ENCODE measurements at regions of chr10 and their contacts with region 1.

Region 1: GRCh38 chr10:80540981-80541750 is 3.5 kb downstream of the SH2D4B start:
- DNase-seq: no peak
- ATAC-seq: peak; percentile 59
- H3K4me3 Mint-ChIP-seq: peak overlapping the region; percentile 76
- H3K27ac Mint-ChIP-seq: peak overlapping the region; percentile 87
- H3K4me1 Mint-ChIP-seq: peaks cover 46% of the 10 kb centered on the region
- H3K27me3 Mint-ChIP-seq: no peaks in the 10 kb centered on the region
- CTCF ChIP-seq: no peak

Region 2: GRCh38 chr10:80530251-80530650 is 10.9 kb before region 1 on chr10:
- CTCF ChIA-PET with region 1: no interaction called
- POLR2A ChIA-PET with region 1: interaction called, 14 read pairs
- intact Hi-C with region 1: no loop called
- DNase-seq: no peak
- ATAC-seq: peak; percentile 60
- H3K4me3 Mint-ChIP-seq: no peak overlapping the region
- H3K27ac Mint-ChIP-seq: no peak overlapping the region
- H3K4me1 Mint-ChIP-seq: no peaks in the 10 kb centered on the region
- H3K27me3 Mint-ChIP-seq: peaks cover 2% of the 10 kb centered on the region
- CTCF ChIP-seq: no peak